A549 (cell line): ENCODE measurements at regions of chr7 and their contacts with region 1.

Region 1: GRCh38 chr7:116180302-116180701 is 30.0 kb upstream of the TES start:
- DNase-seq: peak; percentile 36 to 62
- ATAC-seq: peak; percentile 84 to 88
- H3K4me3 ChIP-seq: no peak overlapping the region
- H3K27ac ChIP-seq: no peak overlapping the region
- H3K4me1 ChIP-seq: peaks cover 14% of the 10 kb centered on the region
- CTCF ChIP-seq: peak; percentile 91
- EP300 ChIP-seq: no peak
- POLR2A ChIP-seq: no peak
- RAD21 ChIP-seq: peak; percentile 89 to 94

Region 2: DNA sequence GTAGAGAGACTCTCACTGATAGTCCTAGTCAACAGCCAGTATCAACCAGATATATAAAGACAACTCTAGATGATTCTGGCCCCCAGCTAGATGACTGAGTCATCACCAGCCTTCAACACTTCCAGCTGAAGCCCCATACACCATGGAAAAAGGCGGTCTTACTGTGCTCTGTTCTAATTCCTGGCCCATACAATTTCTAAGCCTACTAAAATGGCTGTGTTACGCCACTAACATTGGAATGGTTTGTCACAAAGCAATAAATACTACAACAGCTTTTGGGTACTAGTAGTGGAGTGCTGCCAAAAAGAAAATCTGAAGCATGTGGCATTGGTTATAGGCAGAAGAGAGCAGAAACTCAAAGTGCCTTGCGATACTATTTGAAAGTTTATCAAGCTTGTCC is 17.1 kb after region 1 on chr7:
- CTCF ChIA-PET with region 1: interaction called, 39 read pairs
- POLR2A ChIA-PET with region 1: no interaction called
- DNase-seq: no peak
- ATAC-seq: no peak
- H3K4me3 ChIP-seq: no peak overlapping the region
- H3K27ac ChIP-seq: no peak overlapping the region
- H3K4me1 ChIP-seq: peaks cover 10% of the 10 kb centered on the region; the same call in 2 of the 3 replicates
- CTCF ChIP-seq: no peak
- EP300 ChIP-seq: no peak
- POLR2A ChIP-seq: no peak
- RAD21 ChIP-seq: no peak

Region 3: GRCh38 chr7:116211006-116211912 is 31.0 kb after region 1 on chr7:
- CTCF ChIA-PET with region 1: interaction called, 18 read pairs
- POLR2A ChIA-PET with region 1: interaction called, 9 read pairs
- DNase-seq: peak; percentile 87 to 92
- ATAC-seq: peak; percentile 86 to 88
- H3K4me3 ChIP-seq: peak overlapping the region; percentile 89
- H3K27ac ChIP-seq: peak overlapping the region; percentile 83 to 96
- H3K4me1 ChIP-seq: peaks cover 35% of the 10 kb centered on the region
- CTCF ChIP-seq: no peak
- EP300 ChIP-seq: peak in 1 of 2 experiments; percentile 16; a peak in 1 of 5 replicates
- POLR2A ChIP-seq: peak; percentile 36
- RAD21 ChIP-seq: no peak

Region 4: DNA sequence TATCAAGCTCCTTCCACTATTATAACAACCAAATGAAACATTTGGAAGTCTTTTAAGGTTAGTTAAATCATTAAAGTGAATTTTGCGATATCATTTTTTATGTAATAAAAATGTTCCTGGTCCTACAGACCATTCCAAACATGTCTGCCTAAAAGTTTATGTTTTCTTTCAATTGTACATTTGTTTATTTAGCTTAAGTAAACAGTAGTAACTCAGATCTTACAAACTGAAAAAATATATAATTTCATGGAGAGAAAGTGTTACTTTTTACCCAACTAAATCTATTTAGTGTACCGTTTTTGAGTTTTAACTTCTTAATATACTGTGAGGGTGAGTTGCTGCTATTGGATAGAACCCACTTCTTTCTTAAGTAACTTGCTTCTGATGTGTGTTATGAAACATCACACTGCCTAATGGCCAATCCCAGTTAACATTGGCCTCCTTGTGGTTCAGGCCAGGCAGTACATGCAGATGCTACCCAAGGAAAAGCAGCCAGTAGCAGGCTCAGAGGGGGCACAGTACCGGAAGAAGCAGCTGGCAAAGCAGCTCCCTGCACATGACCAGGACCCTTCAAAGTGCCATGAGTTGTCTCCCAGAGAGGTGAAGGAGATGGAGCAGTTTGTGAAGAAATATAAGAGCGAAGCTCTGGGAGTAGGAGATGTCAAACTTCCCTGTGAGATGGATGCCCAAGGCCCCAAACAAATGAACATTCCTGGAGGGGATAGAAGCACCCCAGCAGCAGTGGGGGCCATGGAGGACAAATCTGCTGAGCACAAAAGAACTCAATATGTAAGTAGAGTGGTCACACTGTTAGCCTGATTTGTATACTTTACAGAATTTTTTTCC is 69.6 kb after region 1 on chr7:
- CTCF ChIA-PET with region 1: interaction called, 23 read pairs
- POLR2A ChIA-PET with region 1: no interaction called
- DNase-seq: peak; percentile 45 to 78
- ATAC-seq: peak; percentile 96 to 97
- H3K4me3 ChIP-seq: no peak overlapping the region
- H3K27ac ChIP-seq: no peak overlapping the region
- H3K4me1 ChIP-seq: peaks cover 7% of the 10 kb centered on the region; the same call in 1 of the 3 replicates
- CTCF ChIP-seq: peak; percentile 33
- EP300 ChIP-seq: no peak
- POLR2A ChIP-seq: no peak
- RAD21 ChIP-seq: peak; percentile 36 to 55; a peak in 3 of 5 replicates